Sciatic nerve (tissue), 2 donors: ENCODE measurements at regions of chr2 and their contacts with region 1.

Region 1: GRCh38 chr2:43993437-43993836 is 2.4 kb downstream of the LRPPRC start:
- DNase-seq: no peak
- ATAC-seq: no peak

Region 2: GRCh38 chr2:43787895-43788294 is 205.5 kb before region 1 on chr2:
- intact Hi-C with region 1: loop called (anchors 2 kb)
- DNase-seq: no peak
- ATAC-seq: no peak